Activated naive CD4-positive, alpha-beta T cell treated with anti-CD3 and anti-CD28 coated beads for 36 hours (primary cell): ENCODE measurements at regions of chr11 and their contacts with region 1.

Region 1: GRCh38 chr11:88103337-88104206 is 71.7 kb downstream of the RAB38 start:
- DNase-seq: peak; percentile 35
- H3K4me3 Mint-ChIP-seq: no peak overlapping the region
- H3K27ac Mint-ChIP-seq: no peak overlapping the region
- H3K4me1 Mint-ChIP-seq: no peaks in the 10 kb centered on the region
- H3K27me3 Mint-ChIP-seq: peaks cover 12% of the 10 kb centered on the region

Region 2: DNA sequence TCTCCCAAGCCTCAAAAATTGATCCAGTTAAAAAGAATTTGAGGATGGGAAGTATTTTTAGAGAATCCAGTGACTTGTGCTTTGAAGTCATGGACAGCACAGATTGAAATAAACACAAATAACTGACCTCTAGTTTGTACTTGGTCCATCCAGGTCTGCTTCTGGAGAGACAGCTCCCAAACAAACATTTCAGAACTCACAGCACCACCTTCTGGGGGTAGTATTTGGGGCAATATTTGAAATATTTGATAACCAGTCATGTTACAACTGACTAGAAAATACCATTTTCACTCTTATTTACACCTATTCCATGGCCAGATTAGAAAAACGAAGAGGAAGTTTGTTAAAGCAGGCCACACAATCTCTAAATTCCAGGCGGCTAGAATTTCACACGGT is 177.7 kb after region 1 on chr11:
- CTCF ChIA-PET with region 1: no interaction called
- intact Hi-C with region 1: loop called (anchors 10 kb)
- DNase-seq: no peak
- H3K4me3 Mint-ChIP-seq: no peak overlapping the region
- H3K27ac Mint-ChIP-seq: no peak overlapping the region
- H3K4me1 Mint-ChIP-seq: no peaks in the 10 kb centered on the region
- H3K27me3 Mint-ChIP-seq: no peaks in the 10 kb centered on the region

Region 3: GRCh38 chr11:88484873-88485621 is 381.5 kb after region 1 on chr11:
- CTCF ChIA-PET with region 1: no interaction called
- intact Hi-C with region 1: loop called (anchors 5 kb)
- DNase-seq: peak; percentile 41
- H3K4me3 Mint-ChIP-seq: no peak overlapping the region
- H3K27ac Mint-ChIP-seq: no peak overlapping the region
- H3K4me1 Mint-ChIP-seq: no peaks in the 10 kb centered on the region
- H3K27me3 Mint-ChIP-seq: no peaks in the 10 kb centered on the region